Naive thymus-derived CD4-positive, alpha-beta T cell (primary cell): ENCODE measurements at regions of chr11 and their contacts with region 1.

Region 1: DNA sequence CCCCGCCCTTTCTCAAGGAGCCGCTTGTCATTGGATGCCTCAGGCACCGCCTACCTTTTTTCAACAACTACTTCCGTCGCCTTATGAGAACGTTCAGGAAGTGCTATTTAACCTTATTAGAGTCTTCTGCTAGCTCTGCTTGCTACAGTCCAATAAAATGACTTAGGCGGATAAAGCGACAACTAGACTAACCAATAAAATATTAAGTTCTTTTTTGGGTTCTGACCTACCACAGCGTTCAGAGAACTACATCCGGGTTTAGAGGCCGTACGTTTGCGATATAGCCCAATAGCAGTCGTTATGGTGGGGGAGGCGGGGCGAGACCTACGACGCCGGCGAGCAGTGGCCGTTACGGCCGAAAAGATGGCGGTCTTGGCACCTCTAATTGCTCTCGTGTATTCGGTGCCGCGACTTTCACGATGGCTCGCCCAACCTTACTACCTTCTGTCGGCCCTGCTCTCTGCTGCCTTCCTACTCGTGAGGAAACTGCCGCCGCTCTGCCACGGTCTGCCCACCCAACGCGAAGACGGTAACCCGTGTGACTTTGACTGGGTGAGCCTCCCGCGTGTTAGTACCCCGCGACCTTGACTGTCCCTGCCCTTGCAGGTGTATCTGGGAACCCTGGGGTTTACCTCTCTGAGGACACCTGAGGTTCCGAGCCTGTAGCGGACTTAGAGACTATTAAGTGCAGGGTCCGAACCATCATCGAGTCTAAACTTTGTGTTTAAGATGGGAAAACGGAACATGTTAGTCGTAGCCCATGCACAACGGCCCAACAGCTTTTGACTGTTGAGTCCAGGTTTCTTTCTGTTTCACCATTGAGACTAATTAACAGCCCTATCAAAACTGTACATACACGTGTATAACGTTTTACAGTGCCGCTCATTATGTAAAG is at the start of gene TMX2:
- DNase-seq: peak; percentile 73 to 96 (median 91)
- ATAC-seq: peak; percentile 94
- H3K4me3 ChIP-seq: peak within 1 kb of the TSS; percentile 98
- H3K4me3 Mint-ChIP-seq: peak within 1 kb of the TSS; percentile 86 to 99 (median 98)
- H3K27ac ChIP-seq: peak within 1 kb of the TSS; percentile 95
- H3K27ac Mint-ChIP-seq: peak within 1 kb of the TSS; percentile 87 to 99 (median 95)
- H3K4me1 ChIP-seq: peaks cover 25 to 33% of the 10 kb centered on the region in 2 donors
- H3K4me1 Mint-ChIP-seq: peaks cover 14 to 61% (median 52%) of the 10 kb centered on the region in 7 donors
- H3K27me3 ChIP-seq: no peaks in the 10 kb centered on the region
- H3K27me3 Mint-ChIP-seq: no peaks in the 10 kb centered on the region
- total RNA-seq, gene TMX2: 43.0 to 67.3 (median 64.8) TPM

Region 2: GRCh38 chr11:57335343-57336110 is 377.0 kb before region 1 on chr11 and contains the start of gene SSRP1:
- CTCF ChIA-PET with region 1: no interaction called
- POLR2A ChIA-PET with region 1: no interaction called
- intact Hi-C with region 1: loop called in 1 of 2 experiments (anchors 2 kb)
- DNase-seq: peak; percentile 64 to 90 (median 85)
- ATAC-seq: peak; percentile 99
- H3K4me3 ChIP-seq: peak within 1 kb of the TSS; percentile 77
- H3K4me3 Mint-ChIP-seq: peak within 1 kb of the TSS; percentile 91 to 98 (median 96)
- H3K27ac ChIP-seq: peak within 1 kb of the TSS; percentile 91
- H3K27ac Mint-ChIP-seq: peak within 1 kb of the TSS; percentile 96 to 100 (median 99)
- H3K4me1 ChIP-seq: peaks cover 15 to 19% of the 10 kb centered on the region in 2 donors
- H3K4me1 Mint-ChIP-seq: peaks cover 18 to 44% (median 35%) of the 10 kb centered on the region in 7 donors
- H3K27me3 ChIP-seq: no peaks in the 10 kb centered on the region
- H3K27me3 Mint-ChIP-seq: peaks cover 0 to 2% (median 0%) of the 10 kb centered on the region in 5 donors
- total RNA-seq, gene SSRP1: 46.9 to 146 (median 70.1) TPM

Region 3: DNA sequence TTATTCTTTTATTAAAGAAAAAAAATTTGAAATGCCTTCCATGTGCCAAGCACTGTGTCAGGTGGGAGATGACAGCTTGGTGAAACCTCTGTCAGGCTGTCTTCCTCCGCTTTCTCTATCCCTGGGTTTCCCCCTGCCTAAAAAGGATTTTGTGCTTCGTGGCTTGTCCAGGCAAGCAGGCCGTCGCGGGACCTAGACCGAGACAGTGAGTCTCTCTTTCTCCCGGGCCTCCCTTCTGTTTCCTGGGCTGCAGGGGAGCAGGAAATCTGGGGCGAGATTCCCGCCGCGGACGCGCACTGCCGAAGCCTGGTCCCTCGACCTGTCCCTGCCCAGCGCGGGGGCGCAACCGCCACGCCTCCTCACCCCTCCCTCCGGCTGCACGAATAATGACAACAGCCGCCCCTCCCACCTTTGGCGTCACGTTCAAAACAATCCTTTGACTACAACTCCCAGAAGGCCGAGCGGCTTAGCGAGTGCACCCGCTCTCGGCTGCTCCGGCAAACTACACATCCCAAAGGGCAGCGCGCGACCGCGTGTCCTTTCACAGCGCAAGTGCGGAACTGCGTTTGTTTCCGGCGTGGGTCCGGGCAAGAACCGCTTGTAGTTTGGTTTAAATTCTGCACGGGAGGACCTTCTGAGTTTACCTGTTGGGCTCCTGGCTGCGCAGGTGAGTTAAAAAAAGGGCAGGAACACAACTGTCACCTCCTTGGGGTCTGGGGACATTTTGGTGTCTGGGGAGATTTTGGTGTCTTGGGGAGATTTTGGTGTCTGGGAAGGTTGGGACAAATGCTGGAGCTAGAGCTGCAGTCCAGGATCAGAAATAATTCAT is 55.1 kb before region 1 on chr11 and contains the start of gene CLP1:
- CTCF ChIA-PET with region 1: no interaction called
- POLR2A ChIA-PET with region 1: interaction called, 4 read pairs
- intact Hi-C with region 1: loop called (anchors 1 kb)
- DNase-seq: peak; percentile 87 to 99 (median 98)
- ATAC-seq: peak; percentile 99
- H3K4me3 ChIP-seq: peak within 1 kb of the TSS; percentile 64
- H3K4me3 Mint-ChIP-seq: peak within 1 kb of the TSS; percentile 89 to 100 (median 94)
- H3K27ac ChIP-seq: peak within 1 kb of the TSS; percentile 92
- H3K27ac Mint-ChIP-seq: peak within 1 kb of the TSS; percentile 88 to 98 (median 94)
- H3K4me1 ChIP-seq: peaks cover 4 to 10% of the 10 kb centered on the region in 2 donors
- H3K4me1 Mint-ChIP-seq: peaks cover 8 to 45% (median 36%) of the 10 kb centered on the region in 7 donors
- H3K27me3 ChIP-seq: no peaks in the 10 kb centered on the region
- H3K27me3 Mint-ChIP-seq: no peaks in the 10 kb centered on the region
- total RNA-seq, gene CLP1: 12.8 to 18.5 (median 14.7) TPM

Region 4: GRCh38 chr11:57741132-57742086 is 28.9 kb after region 1 on chr11 and contains the start of gene SELENOH:
- CTCF ChIA-PET with region 1: no interaction called
- POLR2A ChIA-PET with region 1: interaction called, 24 read pairs
- intact Hi-C with region 1: loop called (anchors 1 kb)
- DNase-seq: peak; percentile 75 to 96 (median 91)
- ATAC-seq: peak; percentile 94
- H3K4me3 ChIP-seq: peak within 1 kb of the TSS; percentile 86
- H3K4me3 Mint-ChIP-seq: peak within 1 kb of the TSS; percentile 90 to 100 (median 99)
- H3K27ac ChIP-seq: peak within 1 kb of the TSS; percentile 93
- H3K27ac Mint-ChIP-seq: peak within 1 kb of the TSS; percentile 97 to 100 (median 98)
- H3K4me1 ChIP-seq: peaks cover 16 to 23% of the 10 kb centered on the region in 2 donors
- H3K4me1 Mint-ChIP-seq: peaks cover 12 to 50% (median 41%) of the 10 kb centered on the region in 7 donors
- H3K27me3 ChIP-seq: no peaks in the 10 kb centered on the region
- H3K27me3 Mint-ChIP-seq: no peaks in the 10 kb centered on the region
- total RNA-seq, gene SELENOH: 93.6 to 193 (median 124) TPM

Region 5: DNA sequence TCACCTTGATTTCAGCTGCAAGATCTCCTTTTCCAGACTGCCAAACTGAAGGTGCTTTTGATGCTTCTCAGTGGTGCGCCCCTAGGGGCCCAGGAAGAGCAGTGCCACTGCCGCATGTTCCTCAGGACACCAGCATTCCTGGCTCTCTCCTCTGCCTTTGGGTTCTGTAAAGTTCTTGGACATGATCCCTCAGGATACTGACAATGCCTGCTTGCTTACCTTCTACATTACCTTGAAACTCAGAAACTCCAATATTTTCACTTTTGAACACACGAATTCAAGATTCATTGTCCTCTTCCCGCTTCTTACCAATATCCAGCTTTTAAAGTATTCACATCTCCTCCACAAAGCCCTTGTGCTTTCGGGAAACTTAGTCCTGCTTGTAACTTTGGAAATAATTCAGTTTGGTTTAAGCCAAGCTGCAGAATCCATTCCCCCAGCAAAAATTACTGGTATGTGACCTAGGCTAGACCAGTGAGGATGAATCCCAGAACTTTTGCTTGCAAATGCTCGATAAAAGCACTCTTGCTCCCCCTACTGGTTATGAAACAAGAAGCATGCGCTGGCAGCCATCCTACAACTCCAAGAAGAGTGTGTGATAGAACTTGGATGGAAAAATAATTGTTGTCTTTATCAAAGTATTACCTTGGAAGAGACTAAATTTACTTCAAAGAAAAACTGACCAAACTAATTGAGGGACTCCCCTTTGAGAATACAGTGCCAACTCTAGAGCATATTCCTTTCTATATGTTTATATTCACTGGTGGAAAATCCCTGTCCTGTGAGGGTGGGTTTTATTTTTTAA is 811.9 kb after region 1 on chr11:
- CTCF ChIA-PET with region 1: no interaction called
- POLR2A ChIA-PET with region 1: no interaction called
- intact Hi-C with region 1: loop called in 1 of 2 experiments (anchors 1 kb)
- DNase-seq: peak in 8 of 9 donors; percentile 39 to 78 (median 70)
- ATAC-seq: peak; percentile 78
- H3K4me3 ChIP-seq: peak overlapping the region; percentile 10
- H3K4me3 Mint-ChIP-seq: peak overlapping the region; percentile 65 to 85 (median 80)
- H3K27ac ChIP-seq: peak overlapping the region; percentile 75
- H3K27ac Mint-ChIP-seq: peak overlapping the region; percentile 84 to 99 (median 97)
- H3K4me1 ChIP-seq: peaks cover 18 to 50% of the 10 kb centered on the region in 2 donors
- H3K4me1 Mint-ChIP-seq: peaks cover 27 to 90% (median 54%) of the 10 kb centered on the region in 7 donors
- H3K27me3 ChIP-seq: no peaks in the 10 kb centered on the region
- H3K27me3 Mint-ChIP-seq: no peaks in the 10 kb centered on the region